GM12878 (cell line): ENCODE measurements at regions of chr11 and their contacts with region 1.

Region 1: GRCh38 chr11:86608251-86608799 is 64.1 kb downstream of the ME3 start:
- DNase-seq: peak; percentile 21
- ATAC-seq: peak; percentile 96
- H3K4me3 ChIP-seq: no peak overlapping the region
- H3K27ac ChIP-seq: no peak overlapping the region
- H3K4me1 ChIP-seq: no peaks in the 10 kb centered on the region
- H3K27me3 ChIP-seq: no peaks in the 10 kb centered on the region
- CTCF ChIP-seq: peak; percentile 68 to 92 (median 88)
- EP300 ChIP-seq: no peak
- POLR2A ChIP-seq: no peak
- RAD21 ChIP-seq: peak; percentile 58

Region 2: DNA sequence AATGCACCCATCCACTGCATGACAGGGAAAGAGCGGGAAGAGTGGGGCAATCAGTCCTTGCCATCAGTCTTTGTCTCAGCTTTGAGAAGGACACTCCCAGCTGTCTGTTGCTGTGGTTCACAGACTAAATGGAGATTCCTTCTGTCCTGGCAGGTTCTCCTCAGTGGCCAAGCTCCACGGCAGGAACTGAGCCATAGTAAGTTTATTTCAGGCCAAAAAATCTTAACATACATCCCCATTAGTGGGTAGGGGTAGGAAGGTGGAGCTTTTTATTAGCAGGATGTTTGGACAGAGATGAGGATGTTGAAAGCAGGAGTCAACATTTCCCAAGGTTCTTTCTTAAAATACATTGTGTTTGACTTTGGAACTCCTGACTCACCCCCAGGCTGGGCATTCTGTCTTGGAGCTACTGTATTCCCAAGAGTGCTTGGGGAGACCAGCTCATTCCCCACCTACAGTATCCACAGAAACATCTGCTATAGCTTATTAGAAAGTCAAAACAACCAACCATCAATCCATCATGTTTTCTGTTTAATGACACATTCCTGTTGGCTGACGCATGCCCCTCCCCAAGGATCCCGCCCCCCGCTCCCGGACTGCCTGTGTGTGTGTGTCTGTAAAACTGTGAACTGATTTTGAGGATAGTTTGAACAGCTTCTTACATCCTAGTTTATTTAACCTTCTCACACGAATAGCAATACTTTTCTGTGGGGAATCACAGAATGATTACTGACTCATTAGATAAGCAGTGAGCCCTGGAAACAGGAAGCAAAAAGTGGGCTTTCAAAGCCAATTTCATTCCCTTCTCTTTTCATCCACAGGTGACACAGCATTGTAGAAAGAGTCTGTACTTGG is 124.2 kb before region 1 on chr11:
- CTCF ChIA-PET with region 1: interaction called, 49 read pairs
- POLR2A ChIA-PET with region 1: interaction called, 3 read pairs
- RAD21 ChIA-PET with region 1: interaction called, 9 read pairs
- SMC1A ChIA-PET with region 1: interaction called, 25 read pairs
- in situ Hi-C with region 1: no loop called
- intact Hi-C with region 1: no loop called
- DNase-seq: no peak
- ATAC-seq: no peak
- H3K4me3 ChIP-seq: no peak overlapping the region
- H3K27ac ChIP-seq: no peak overlapping the region
- H3K4me1 ChIP-seq: no peaks in the 10 kb centered on the region
- H3K27me3 ChIP-seq: peaks cover 0 to 2% of the 10 kb centered on the region in 2 experiments; a peak in 1 of 4 replicates
- CTCF ChIP-seq: no peak
- EP300 ChIP-seq: no peak
- POLR2A ChIP-seq: no peak
- RAD21 ChIP-seq: no peak

Region 3: GRCh38 chr11:86551286-86552092 is 56.8 kb before region 1 on chr11:
- CTCF ChIA-PET with region 1: interaction called, 10 read pairs
- POLR2A ChIA-PET with region 1: no interaction called
- RAD21 ChIA-PET with region 1: interaction called, 5 read pairs
- SMC1A ChIA-PET with region 1: interaction called, 6 read pairs
- in situ Hi-C with region 1: no loop called
- intact Hi-C with region 1: no loop called
- DNase-seq: peak; percentile 1
- ATAC-seq: peak; percentile 84
- H3K4me3 ChIP-seq: no peak overlapping the region
- H3K27ac ChIP-seq: no peak overlapping the region
- H3K4me1 ChIP-seq: no peaks in the 10 kb centered on the region
- H3K27me3 ChIP-seq: no peaks in the 10 kb centered on the region; a peak in 1 of 4 replicates
- CTCF ChIP-seq: no peak
- EP300 ChIP-seq: no peak
- POLR2A ChIP-seq: no peak
- RAD21 ChIP-seq: no peak

Region 4: DNA sequence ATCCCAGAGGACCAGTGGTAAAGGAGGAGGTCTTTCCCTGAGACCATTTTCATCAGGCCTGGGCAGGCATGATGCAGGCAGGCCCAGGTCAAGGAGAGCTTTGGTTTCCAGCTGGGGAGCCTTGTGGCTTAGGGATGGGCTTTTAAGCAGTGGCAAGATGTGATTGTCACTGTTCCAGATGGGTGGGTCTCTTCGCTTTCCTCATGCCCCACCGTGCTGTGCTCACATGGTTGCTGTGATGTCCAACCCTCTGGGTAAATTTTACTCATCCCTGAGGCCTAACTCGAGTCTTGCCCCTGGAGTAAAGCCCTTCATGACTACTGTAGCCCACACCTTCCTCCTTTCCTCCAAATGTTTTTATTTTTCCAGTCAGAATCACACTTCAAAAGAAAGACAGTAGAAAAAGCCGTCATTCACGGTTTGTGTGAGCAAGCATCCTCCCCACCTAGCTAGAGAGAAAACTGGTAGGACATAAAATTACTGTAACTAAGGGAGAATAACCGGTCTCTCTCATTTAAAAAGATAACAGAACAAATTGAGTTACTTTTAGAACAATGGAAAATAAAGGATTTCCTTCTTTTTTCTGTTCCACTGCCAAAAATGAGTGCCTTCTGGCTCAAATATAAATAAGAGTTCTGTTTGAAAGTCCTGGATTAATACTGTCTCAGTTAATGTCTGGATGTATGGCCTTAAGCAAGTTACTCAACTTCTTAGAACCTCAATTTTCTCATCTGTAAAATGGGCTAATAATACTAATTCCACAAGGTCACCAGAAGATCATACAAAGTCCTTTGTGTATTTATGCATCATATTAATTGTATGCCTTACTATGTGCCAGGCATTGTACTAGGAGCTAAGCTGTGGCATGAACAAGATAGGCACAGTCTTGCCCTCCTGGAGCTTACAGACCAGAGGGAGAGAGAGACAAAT is 20.8 kb before region 1 on chr11:
- CTCF ChIA-PET with region 1: interaction called, 17 read pairs
- POLR2A ChIA-PET with region 1: no interaction called
- RAD21 ChIA-PET with region 1: interaction called, 24 read pairs
- SMC1A ChIA-PET with region 1: interaction called, 18 read pairs
- in situ Hi-C with region 1: no loop called
- intact Hi-C with region 1: no loop called
- DNase-seq: no peak
- ATAC-seq: no peak
- H3K4me3 ChIP-seq: no peak overlapping the region
- H3K27ac ChIP-seq: no peak overlapping the region
- H3K4me1 ChIP-seq: peaks cover 4% of the 10 kb centered on the region
- H3K27me3 ChIP-seq: no peaks in the 10 kb centered on the region
- CTCF ChIP-seq: no peak
- EP300 ChIP-seq: no peak
- POLR2A ChIP-seq: no peak
- RAD21 ChIP-seq: no peak

Region 5: DNA sequence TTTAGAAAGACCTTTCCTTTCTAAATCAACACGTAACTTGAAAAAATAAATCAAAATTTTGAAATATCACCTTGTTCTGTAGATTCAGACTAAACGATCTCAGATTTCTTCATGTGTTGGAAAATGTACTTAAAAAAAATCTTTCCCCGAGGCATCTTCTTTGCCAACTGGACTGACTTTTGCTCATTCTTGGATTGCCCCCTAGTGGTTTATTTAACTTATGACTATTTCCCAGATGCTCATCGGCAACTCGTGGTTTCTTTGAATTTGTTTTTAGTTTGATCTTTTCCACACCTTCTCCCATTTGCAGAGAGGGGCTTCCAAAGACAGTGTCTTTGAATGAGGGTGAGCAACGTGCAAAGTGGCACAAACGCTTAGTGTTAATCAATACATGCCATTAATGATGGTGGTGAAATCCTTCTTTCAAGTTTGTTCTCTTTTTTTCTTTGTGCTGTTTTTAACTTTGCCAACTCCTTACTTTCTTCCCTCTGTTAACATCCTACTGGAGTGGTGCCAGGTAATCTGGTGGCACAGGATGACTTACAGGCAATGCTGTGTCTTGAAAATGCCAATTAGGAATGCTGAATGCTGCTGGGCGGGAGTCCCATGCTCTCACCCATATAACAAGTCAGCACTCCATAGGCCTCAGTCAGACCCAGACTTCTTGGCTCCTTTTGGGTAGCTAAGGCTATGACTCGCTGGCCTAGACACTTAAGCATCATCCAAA is 210.3 kb after region 1 on chr11:
- CTCF ChIA-PET with region 1: interaction called, 5 read pairs
- POLR2A ChIA-PET with region 1: no interaction called
- RAD21 ChIA-PET with region 1: interaction called, 3 read pairs
- SMC1A ChIA-PET with region 1: interaction called, 5 read pairs
- in situ Hi-C with region 1: loop called (anchors 10 kb)
- intact Hi-C with region 1: loop called (anchors 5 kb)
- DNase-seq: peak; percentile 7
- ATAC-seq: peak; percentile 72
- H3K4me3 ChIP-seq: no peak overlapping the region
- H3K27ac ChIP-seq: no peak overlapping the region
- H3K4me1 ChIP-seq: no peaks in the 10 kb centered on the region
- H3K27me3 ChIP-seq: no peaks in the 10 kb centered on the region; a peak in 2 of 4 replicates
- CTCF ChIP-seq: peak; percentile 50 to 73 (median 65); a peak in 5 of 6 replicates
- EP300 ChIP-seq: no peak
- POLR2A ChIP-seq: no peak
- RAD21 ChIP-seq: peak; percentile 91